ENCODE measurements at regions of chr12 and their contacts with region 1.

Region 1: DNA sequence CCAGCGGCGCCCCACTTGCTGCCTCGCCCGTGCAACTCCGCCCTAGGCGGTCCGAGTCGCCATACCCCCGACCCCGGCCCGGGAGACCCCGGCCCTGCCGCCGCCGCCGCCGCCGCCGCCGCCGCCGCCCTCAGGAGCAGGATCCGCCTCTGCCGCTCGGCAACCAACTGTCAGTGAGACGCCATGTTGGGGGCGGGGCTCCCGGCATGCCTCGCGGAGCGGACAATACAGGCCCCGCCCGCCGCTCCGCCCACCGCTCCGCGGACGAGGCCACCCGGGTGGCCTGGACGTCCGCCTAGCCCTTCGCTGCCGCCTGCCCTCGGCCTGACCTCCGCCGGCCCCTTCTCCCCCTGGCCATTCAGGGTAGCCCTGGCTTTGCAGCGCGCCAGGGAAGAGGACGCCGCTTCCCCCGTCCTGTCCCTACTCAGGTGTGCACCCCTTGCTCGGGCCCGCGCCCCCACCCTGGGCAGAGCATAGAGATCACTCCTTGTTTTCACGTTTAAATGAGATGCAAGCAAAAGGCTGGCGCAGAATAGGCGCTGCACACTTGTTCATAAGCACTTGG is at the start of gene HECTD4:
- DNase-seq: peak; percentile 96
- H3K4me3 ChIP-seq: peak within 1 kb of the TSS; percentile 86 to 100 (median 95)
- H3K27ac ChIP-seq: peak within 1 kb of the TSS; percentile 90 to 97 (median 94)
- H3K4me1 ChIP-seq: peaks cover 10 to 27% (median 22%) of the 10 kb centered on the region in 4 donors
- H3K27me3 ChIP-seq: no peaks in the 10 kb centered on the region
- CTCF ChIP-seq: no peak
- EP300 ChIP-seq: no peak
- POLR2A ChIP-seq: peak; percentile 89
- total RNA-seq, gene HECTD4: 52.6 to 171 (median 121) TPM

Region 2: GRCh38 chr12:111942557-111942956 is 439.8 kb before region 1 on chr12:
- in situ Hi-C with region 1: loop called in 1 of 4 experiments (anchors 25 kb)
- intact Hi-C with region 1: no loop called
- DNase-seq: peak; percentile 30
- H3K4me3 ChIP-seq: no peak overlapping the region
- H3K27ac ChIP-seq: no peak overlapping the region
- H3K4me1 ChIP-seq: no peaks in the 10 kb centered on the region
- H3K27me3 ChIP-seq: no peaks in the 10 kb centered on the region
- CTCF ChIP-seq: no peak
- EP300 ChIP-seq: no peak
- POLR2A ChIP-seq: no peak

Region 3: DNA sequence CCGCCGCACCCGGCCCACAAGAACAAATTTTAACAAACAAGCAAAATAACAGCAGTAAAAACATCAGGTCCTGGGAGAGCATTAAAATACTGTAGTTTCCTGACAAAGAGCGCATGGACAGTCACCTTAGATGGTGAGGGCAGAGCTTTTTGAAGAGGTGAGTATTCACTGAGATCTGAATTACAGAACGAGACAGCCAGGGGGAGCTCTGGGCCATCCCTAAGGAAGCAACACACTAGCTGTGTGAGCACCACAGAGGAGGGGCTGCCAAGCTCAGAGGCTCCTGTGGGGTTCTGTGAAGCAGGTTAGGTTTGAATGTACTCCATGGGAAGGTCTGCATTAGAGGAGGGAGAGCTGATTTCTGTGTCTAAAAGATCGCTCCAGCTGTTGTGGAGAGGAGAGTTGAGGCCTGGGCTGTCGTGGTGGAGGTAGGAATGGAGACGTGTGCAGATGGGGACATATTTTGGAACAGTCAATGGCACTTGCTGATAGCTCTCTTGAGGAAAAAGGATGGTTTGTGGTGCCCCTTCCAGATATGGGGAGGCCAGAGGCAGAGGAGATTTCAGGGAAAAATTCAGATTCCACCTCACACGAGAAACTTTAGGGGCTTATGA is 184.1 kb before region 1 on chr12:
- in situ Hi-C with region 1: loop called in 1 of 4 experiments (anchors 5 kb)
- intact Hi-C with region 1: no loop called
- DNase-seq: peak; percentile 28
- H3K4me3 ChIP-seq: no peak overlapping the region
- H3K27ac ChIP-seq: no peak overlapping the region
- H3K4me1 ChIP-seq: no peaks in the 10 kb centered on the region
- H3K27me3 ChIP-seq: no peaks in the 10 kb centered on the region
- CTCF ChIP-seq: peak; percentile 23 to 52 (median 42)
- EP300 ChIP-seq: no peak
- POLR2A ChIP-seq: no peak

Region 4: DNA sequence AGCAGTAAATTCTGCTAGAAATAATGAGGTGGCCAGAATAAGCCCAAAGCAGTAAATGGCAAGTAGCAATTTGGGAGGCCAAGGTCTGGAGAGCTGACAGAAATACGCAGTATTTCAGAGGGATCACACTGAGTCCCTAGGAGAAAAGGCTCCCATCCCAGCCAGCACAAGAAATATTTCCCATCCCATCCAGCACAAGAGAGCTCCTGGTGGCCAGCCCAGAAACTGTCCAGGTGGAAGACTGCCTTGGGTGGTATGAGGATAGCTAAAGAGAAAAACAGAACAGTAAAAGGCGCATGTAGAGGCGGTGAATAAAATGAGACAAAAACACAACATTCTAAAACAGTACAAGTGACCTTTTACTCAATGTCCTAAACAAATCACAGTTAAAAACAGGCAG is 120.8 kb before region 1 on chr12:
- in situ Hi-C with region 1: loop called in 1 of 4 experiments (anchors 10 kb)
- intact Hi-C with region 1: no loop called
- DNase-seq: no peak
- H3K4me3 ChIP-seq: no peak overlapping the region
- H3K27ac ChIP-seq: no peak overlapping the region
- H3K4me1 ChIP-seq: no peaks in the 10 kb centered on the region
- H3K27me3 ChIP-seq: no peaks in the 10 kb centered on the region
- CTCF ChIP-seq: no peak
- EP300 ChIP-seq: no peak
- POLR2A ChIP-seq: no peak

Region 5: DNA sequence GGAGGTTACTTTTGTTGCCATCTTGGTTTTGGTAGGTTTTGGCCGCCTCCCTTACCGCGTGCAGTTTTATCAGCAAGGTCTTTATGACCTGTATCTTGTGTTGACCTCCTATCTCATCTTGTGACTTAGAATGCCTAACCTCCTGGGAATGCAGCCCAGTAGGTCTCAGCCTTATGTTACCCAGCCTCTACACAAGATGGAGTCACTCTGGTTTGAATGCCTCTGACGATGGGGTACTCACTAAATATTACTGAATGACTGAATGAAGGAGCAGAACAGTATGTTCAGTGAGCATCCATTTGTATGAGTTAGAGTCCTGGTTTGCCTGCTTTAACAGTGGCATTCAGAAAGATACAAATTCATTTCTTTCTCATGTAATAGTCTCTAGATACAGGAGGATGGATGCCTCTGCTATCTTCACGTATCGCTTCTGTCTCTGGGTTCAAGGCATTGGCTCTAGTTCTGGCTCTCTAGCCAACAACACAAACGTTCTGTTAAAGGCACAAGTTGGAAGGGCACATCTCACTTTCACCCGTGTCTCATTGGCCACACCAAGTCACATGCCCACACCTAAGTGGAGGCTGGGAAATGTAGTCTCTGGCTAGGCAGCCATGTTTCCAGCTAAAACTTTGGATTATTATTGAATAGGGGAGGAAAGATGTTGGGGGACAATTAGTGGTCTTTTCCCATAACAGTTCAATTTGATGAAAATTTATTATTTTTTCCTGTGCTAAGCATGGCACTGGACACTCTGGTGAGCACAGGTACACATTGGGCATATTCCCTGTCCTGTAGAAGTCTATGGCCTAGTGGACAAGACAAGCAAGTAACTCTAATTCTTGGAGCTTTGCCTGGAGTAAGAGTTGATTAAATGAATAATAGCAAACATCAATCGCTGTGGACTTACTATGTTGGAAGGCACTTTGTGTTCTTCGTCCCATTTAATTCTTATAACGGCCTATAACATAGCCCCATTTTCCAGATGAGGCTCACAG is 334.1 kb after region 1 on chr12:
- in situ Hi-C with region 1: no loop called
- intact Hi-C with region 1: no loop called
- DNase-seq: no peak
- H3K4me3 ChIP-seq: no peak overlapping the region
- H3K27ac ChIP-seq: no peak overlapping the region
- H3K4me1 ChIP-seq: no peaks in the 10 kb centered on the region
- H3K27me3 ChIP-seq: no peaks in the 10 kb centered on the region
- CTCF ChIP-seq: no peak
- EP300 ChIP-seq: no peak
- POLR2A ChIP-seq: no peak

Measured in transverse colon (tissue), 4 donors.